ENCODE measurements at regions of chr2 and their contacts with region 1.

Region 1: GRCh38 chr2:28870146-28870891 is at the start of gene TRMT61B:
- DNase-seq: peak; percentile 94 to 97 (median 95)
- ATAC-seq: peak; percentile 98
- H3K4me3 ChIP-seq: peak within 1 kb of the TSS; percentile 96
- H3K4me3 Mint-ChIP-seq: peak within 1 kb of the TSS; percentile 90 to 98 (median 96)
- H3K27ac ChIP-seq: peak within 1 kb of the TSS; percentile 87
- H3K27ac Mint-ChIP-seq: peak within 1 kb of the TSS; percentile 95 to 100 (median 98)
- H3K4me1 ChIP-seq: peaks cover 19 to 22% of the 10 kb centered on the region in 2 donors
- H3K4me1 Mint-ChIP-seq: peaks cover 22 to 48% (median 37%) of the 10 kb centered on the region in 7 donors
- H3K27me3 ChIP-seq: no peaks in the 10 kb centered on the region
- H3K27me3 Mint-ChIP-seq: peaks cover 0 to 6% (median 2%) of the 10 kb centered on the region in 5 donors
- total RNA-seq, gene TRMT61B: 14.8 to 24.5 (median 20.5) TPM

Region 2: DNA sequence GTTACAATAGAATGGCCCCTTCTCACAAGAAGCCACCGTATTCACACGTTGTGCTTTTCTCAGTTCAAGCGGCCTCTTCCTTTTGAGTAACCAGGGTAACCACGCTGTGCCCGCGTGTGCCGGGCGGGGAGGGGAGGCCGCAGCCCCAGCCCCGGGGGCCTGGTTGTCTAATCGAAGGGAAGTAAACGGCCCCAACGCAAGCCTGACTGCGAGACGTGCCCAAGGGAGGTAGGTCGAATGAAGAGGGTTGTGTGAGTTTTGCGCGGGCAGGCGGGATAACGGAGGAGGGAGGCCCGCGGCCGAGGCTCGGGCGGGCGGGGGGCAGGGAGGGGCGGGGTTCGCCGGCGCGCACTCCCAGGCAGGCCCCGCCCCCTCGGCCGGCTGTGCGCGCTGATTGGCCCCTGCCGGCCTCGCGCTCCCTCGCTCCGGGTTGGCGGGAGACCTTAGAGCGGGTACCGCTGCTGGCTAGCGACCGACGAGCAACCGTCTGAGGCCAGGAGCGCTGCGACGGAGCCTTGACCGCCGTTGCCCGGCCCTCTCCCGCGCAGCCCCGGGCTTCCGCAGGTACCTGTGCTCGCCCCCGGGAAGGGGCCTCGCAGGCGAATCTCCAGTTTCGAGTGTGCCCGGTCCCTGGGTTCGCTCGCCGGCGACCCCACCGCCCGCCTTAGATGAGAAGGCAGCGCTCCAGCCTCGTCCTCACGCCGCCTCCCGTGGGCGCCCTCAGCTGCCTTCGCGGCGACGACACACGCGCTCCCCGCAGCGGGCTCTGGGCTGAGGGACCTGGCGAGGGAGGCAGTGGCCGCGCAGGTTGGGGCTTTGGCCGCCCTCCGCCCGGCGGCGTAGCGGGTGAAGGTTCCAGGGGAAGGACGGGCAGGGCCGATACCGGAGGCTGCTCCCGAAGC is 59.7 kb before region 1 on chr2 and contains the start of gene SPDYA:
- CTCF ChIA-PET with region 1: no interaction called
- POLR2A ChIA-PET with region 1: interaction called, 9 read pairs
- intact Hi-C with region 1: loop called (anchors 1 kb)
- DNase-seq: peak; percentile 65 to 88 (median 77)
- ATAC-seq: peak; percentile 96
- H3K4me3 ChIP-seq: peak within 1 kb of the TSS; percentile 63
- H3K4me3 Mint-ChIP-seq: peak within 1 kb of the TSS; percentile 76 to 94 (median 84)
- H3K27ac ChIP-seq: peak within 1 kb of the TSS; percentile 50
- H3K27ac Mint-ChIP-seq: peak within 1 kb of the TSS; percentile 11 to 73 (median 59)
- H3K4me1 ChIP-seq: peaks cover 5 to 9% of the 10 kb centered on the region in 2 donors
- H3K4me1 Mint-ChIP-seq: peaks cover 7 to 23% (median 16%) of the 10 kb centered on the region in 7 donors
- H3K27me3 ChIP-seq: no peaks in the 10 kb centered on the region
- H3K27me3 Mint-ChIP-seq: peaks cover 0 to 8% (median 0%) of the 10 kb centered on the region in 5 donors
- total RNA-seq, gene SPDYA: 1.3 to 9.8 (median 4.6) TPM

Region 3: GRCh38 chr2:28855193-28855592 is 15.1 kb before region 1 on chr2:
- CTCF ChIA-PET with region 1: no interaction called
- POLR2A ChIA-PET with region 1: interaction called, 13 read pairs
- intact Hi-C with region 1: no loop called
- DNase-seq: no peak
- ATAC-seq: no peak
- H3K4me3 ChIP-seq: no peak overlapping the region
- H3K4me3 Mint-ChIP-seq: no peak overlapping the region
- H3K27ac ChIP-seq: no peak overlapping the region
- H3K27ac Mint-ChIP-seq: peak overlapping the region in 1 of 9 donors; percentile 38
- H3K4me1 ChIP-seq: no peaks in the 10 kb centered on the region
- H3K4me1 Mint-ChIP-seq: peaks cover 0 to 9% (median 1%) of the 10 kb centered on the region in 7 donors
- H3K27me3 ChIP-seq: no peaks in the 10 kb centered on the region
- H3K27me3 Mint-ChIP-seq: no peaks in the 10 kb centered on the region

Region 4: DNA sequence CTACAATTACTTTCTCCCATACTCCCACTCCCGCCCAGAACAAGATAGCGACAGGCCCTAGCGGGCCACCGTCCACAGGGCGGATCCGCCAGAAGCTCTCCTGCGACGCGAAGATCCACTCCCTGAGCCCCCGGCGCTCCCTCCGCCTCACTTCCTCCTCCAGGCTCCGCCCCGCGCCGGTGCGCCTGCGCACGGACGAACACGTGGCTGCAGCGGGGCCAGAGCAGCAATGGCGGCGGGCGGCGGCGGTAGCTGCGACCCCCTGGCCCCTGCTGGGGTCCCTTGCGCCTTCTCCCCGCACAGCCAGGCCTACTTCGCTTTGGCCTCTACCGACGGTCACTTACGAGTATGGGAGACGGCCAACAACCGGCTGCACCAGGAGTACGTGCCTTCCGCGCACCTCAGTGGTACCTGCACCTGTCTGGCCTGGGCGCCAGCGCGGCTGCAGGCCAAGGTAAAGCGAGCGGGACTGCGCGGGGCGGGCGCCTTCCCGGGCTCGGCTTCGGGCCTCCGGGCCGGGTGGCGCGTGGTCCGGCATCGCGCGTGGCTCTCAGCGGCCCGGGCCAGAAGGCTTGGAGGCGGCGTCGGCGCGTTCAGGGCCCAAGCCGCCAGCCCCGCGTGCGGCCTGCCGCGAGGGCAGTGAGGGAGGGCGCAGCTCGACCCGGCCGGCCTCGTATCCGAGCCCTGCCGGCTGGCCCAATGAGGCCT is 24.3 kb after region 1 on chr2 and contains the start of gene WDR43:
- CTCF ChIA-PET with region 1: interaction called, 4 read pairs
- POLR2A ChIA-PET with region 1: interaction called, 93 read pairs
- intact Hi-C with region 1: loop called (anchors 1 kb)
- DNase-seq: peak; percentile 97 to 100 (median 99)
- ATAC-seq: peak; percentile 100
- H3K4me3 ChIP-seq: peak within 1 kb of the TSS; percentile 88
- H3K4me3 Mint-ChIP-seq: peak within 1 kb of the TSS; percentile 91 to 99 (median 98)
- H3K27ac ChIP-seq: peak within 1 kb of the TSS; percentile 78
- H3K27ac Mint-ChIP-seq: peak within 1 kb of the TSS; percentile 91 to 99 (median 94)
- H3K4me1 ChIP-seq: peaks cover 28% of the 10 kb centered on the region in 2 donors
- H3K4me1 Mint-ChIP-seq: peaks cover 31 to 49% (median 43%) of the 10 kb centered on the region in 7 donors
- H3K27me3 ChIP-seq: no peaks in the 10 kb centered on the region
- H3K27me3 Mint-ChIP-seq: peaks cover 0 to 2% (median 0%) of the 10 kb centered on the region in 5 donors
- total RNA-seq, gene WDR43: 49.6 to 75.0 (median 63.9) TPM

Measured in naive thymus-derived CD4-positive, alpha-beta T cell (primary cell).